Activated T-helper 1 cell treated with anti-CD3 and anti-CD28 coated beads, Interleukin-12 subunit alpha, Interleukin-12 subunit beta, Interleukin-2, Interleukin-4 antibody, amounts not matched to agents 30 ng/mL and 10 ng/mL and 1 ng/mL, durations not matched to agents 14 hours and 24 hours and 36 hours (primary cell): ENCODE measurements at regions of chr6 and their contacts with region 1.

Region 1: GRCh38 chr6:132391391-132392271 is 9.6 kb downstream of the MOXD1 start:
- DNase-seq: no peak
- H3K4me3 Mint-ChIP-seq: no peak overlapping the region
- H3K27ac Mint-ChIP-seq: no peak overlapping the region
- H3K4me1 Mint-ChIP-seq: no peaks in the 10 kb centered on the region
- H3K27me3 Mint-ChIP-seq: peaks cover 26% of the 10 kb centered on the region

Region 2: GRCh38 chr6:132279592-132280139 is 112.0 kb before region 1 on chr6:
- intact Hi-C with region 1: loop called (anchors 2 kb)
- DNase-seq: peak; percentile 58
- H3K4me3 Mint-ChIP-seq: peak overlapping the region; percentile 75
- H3K27ac Mint-ChIP-seq: no peak overlapping the region
- H3K4me1 Mint-ChIP-seq: no peaks in the 10 kb centered on the region
- H3K27me3 Mint-ChIP-seq: peaks cover 15% of the 10 kb centered on the region

Region 3: GRCh38 chr6:132300323-132300949 is 91.2 kb before region 1 on chr6:
- intact Hi-C with region 1: loop called (anchors 1 kb)
- DNase-seq: no peak
- H3K4me3 Mint-ChIP-seq: no peak overlapping the region
- H3K27ac Mint-ChIP-seq: no peak overlapping the region
- H3K4me1 Mint-ChIP-seq: no peaks in the 10 kb centered on the region
- H3K27me3 Mint-ChIP-seq: peaks cover 17% of the 10 kb centered on the region

Region 4: GRCh38 chr6:132490024-132490423 is 98.4 kb after region 1 on chr6:
- intact Hi-C with region 1: no loop called
- DNase-seq: no peak
- H3K4me3 Mint-ChIP-seq: no peak overlapping the region
- H3K27ac Mint-ChIP-seq: no peak overlapping the region
- H3K4me1 Mint-ChIP-seq: peaks cover 14% of the 10 kb centered on the region
- H3K27me3 Mint-ChIP-seq: no peaks in the 10 kb centered on the region